Head of caudate nucleus (tissue), 42 donors: ENCODE measurements at regions of chr6 and their contacts with region 1.

Region 1: DNA sequence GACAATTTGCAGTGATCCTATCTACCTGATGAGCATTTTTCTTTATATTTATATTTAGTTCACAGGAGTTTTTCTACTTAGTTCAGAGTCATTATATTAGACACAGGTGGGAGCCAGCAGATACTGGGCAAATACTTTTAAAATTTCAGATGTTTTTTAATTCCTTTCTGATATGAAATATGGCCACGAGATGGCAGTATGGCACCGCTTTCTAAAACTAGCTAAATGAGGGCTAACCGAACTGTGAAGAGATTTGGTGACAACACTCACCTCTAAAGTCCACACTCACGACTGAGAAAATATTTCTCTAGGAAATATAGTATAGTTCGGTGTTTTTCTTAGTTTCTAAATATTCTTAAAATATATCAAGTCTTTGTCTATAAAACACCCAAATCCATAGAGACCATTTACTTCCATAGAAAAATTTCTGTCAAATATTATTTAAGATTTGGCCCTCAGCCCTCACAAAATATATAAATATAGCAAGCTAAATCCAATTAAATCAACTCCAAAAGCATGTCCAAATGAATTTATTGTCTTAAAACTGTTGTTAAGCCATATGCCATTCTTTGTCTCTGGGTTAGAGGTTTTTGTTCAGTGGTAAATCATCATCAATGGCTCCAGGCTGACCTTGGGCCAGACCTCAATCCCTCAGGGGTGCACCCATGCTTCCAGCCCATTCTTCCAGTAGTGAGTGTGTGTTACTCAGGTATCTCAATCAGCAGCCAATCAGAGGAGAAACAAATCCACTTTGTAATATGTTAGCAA is 63.6 kb downstream of the HUS1B start:
- DNase-seq: peak in 34 of 42 donors; percentile 16 to 86 (median 60)

Region 2: GRCh38 chr6:1381481-1382330 is 788.4 kb after region 1 on chr6:
- intact Hi-C with region 1: loop called (anchors 10 kb)
- DNase-seq: peak in 34 of 42 donors; percentile 23 to 84 (median 64)